Right cardiac atrium (tissue), 5 donors: ENCODE measurements at regions of chr7 and their contacts with region 1.

Region 1: GRCh38 chr7:3380886-3381685 is 80.0 kb downstream of the SDK1 start:
- DNase-seq: no peak
- ATAC-seq: no peak
- H3K4me3 ChIP-seq: no peak overlapping the region
- H3K27ac ChIP-seq: no peak overlapping the region
- H3K4me1 ChIP-seq: no peaks in the 10 kb centered on the region
- H3K27me3 ChIP-seq: no peaks in the 10 kb centered on the region

Region 2: GRCh38 chr7:2209146-2209960 is 1171.7 kb before region 1 on chr7:
- intact Hi-C with region 1: no loop called
- DNase-seq: peak; percentile 77 to 90 (median 90)
- ATAC-seq: peak; percentile 58 to 75
- H3K4me3 ChIP-seq: no peak overlapping the region
- H3K27ac ChIP-seq: no peak overlapping the region
- H3K4me1 ChIP-seq: peaks cover 2% of the 10 kb centered on the region
- H3K27me3 ChIP-seq: no peaks in the 10 kb centered on the region

Region 3: GRCh38 chr7:3232228-3232627 is 148.9 kb before region 1 on chr7:
- intact Hi-C with region 1: no loop called
- DNase-seq: no peak
- ATAC-seq: peak in 1 of 2 donors; percentile 40
- H3K4me3 ChIP-seq: no peak overlapping the region
- H3K27ac ChIP-seq: no peak overlapping the region
- H3K4me1 ChIP-seq: no peaks in the 10 kb centered on the region
- H3K27me3 ChIP-seq: no peaks in the 10 kb centered on the region

Region 4: DNA sequence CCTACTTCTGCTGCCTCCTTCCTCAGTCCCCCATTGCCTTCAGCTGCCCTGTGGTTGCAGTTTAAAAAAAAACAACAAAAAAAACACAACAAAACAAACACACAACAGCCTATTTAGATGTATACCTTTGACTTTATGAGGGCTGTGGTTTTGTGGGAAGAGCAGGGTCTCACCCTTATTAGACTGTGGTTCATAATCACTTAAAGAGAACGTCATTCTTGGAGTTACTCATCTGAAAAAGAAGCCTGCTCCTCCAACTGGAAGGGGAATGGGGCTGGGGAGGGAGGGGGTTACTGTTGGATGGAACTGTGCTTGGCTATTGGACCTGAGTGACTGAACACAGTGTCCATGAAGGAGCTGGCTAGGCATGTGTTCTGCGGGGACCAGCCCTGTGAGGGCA is 32.0 kb before region 1 on chr7:
- intact Hi-C with region 1: loop called in 1 of 4 experiments (anchors 2 kb)
- DNase-seq: no peak
- ATAC-seq: no peak
- H3K4me3 ChIP-seq: no peak overlapping the region
- H3K27ac ChIP-seq: no peak overlapping the region
- H3K4me1 ChIP-seq: no peaks in the 10 kb centered on the region
- H3K27me3 ChIP-seq: no peaks in the 10 kb centered on the region

Region 5: DNA sequence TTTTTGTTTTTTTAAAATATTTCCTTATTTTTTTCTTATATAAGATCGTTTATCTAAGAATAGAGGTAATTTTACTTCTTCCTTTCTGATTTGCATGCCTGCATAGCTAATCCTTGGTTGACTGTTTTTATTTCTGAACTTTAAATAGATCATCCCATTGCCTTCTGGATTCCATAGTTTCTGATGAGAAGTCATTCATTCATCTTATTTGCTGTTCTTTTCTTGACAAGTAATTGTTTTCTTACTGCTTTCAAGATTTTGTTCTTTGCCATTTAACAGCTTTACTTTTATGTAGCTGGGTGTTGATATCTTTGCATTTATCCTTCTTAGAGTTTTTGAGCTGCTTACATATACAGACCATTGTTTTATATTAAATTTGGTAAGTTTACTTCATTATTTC is 357.9 kb after region 1 on chr7:
- intact Hi-C with region 1: no loop called
- DNase-seq: no peak
- ATAC-seq: no peak
- H3K4me3 ChIP-seq: no peak overlapping the region
- H3K27ac ChIP-seq: no peak overlapping the region
- H3K4me1 ChIP-seq: no peaks in the 10 kb centered on the region
- H3K27me3 ChIP-seq: no peaks in the 10 kb centered on the region